ENCODE measurements at regions of chr5 and their contacts with region 1.

Region 1: GRCh38 chr5:139593716-139594319 is 32.7 kb downstream of the UBE2D2 start:
- DNase-seq: peak; percentile 40 to 65
- ATAC-seq: peak; percentile 68 to 70; a peak in 5 of 6 replicates
- H3K4me3 ChIP-seq: no peak overlapping the region
- H3K27ac ChIP-seq: peak overlapping the region; percentile 49 to 75; a peak in 5 of 6 replicates
- H3K4me1 ChIP-seq: peaks cover 42% of the 10 kb centered on the region
- CTCF ChIP-seq: no peak
- EP300 ChIP-seq: no peak
- POLR2A ChIP-seq: no peak
- RAD21 ChIP-seq: no peak

Region 2: DNA sequence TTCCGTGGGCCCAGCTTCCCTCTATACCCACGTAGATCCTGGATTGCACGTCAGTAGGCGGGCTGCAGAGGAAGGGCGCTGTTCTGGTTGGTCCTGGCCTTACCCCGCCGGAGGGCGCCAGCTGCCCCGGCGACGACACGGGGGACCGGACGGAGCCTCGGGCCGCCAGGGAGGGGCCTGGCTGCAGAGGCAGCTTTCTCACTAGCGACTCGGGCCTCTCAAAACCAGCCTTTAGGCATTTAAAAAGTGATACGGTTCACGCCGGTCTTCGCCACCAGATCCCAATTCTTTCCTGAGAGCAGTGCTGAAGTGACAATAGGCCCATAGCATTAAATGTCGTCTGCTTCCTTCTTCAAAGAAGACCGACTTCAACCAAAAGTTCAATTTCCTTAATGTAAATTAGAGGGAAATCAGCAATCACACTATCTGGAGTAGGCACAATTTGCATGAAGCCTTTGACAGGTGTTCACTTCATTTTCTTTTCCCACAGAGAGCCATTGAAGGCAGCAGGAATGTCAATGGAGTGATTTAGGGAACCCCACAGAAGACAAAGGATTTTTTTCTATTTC is 50.3 kb before region 1 on chr5:
- CTCF ChIA-PET with region 1: no interaction called
- POLR2A ChIA-PET with region 1: no interaction called
- DNase-seq: no peak
- ATAC-seq: peak in 1 of 2 experiments; percentile 69; a peak in 3 of 6 replicates
- H3K4me3 ChIP-seq: no peak overlapping the region
- H3K27ac ChIP-seq: no peak overlapping the region
- H3K4me1 ChIP-seq: no peaks in the 10 kb centered on the region
- CTCF ChIP-seq: no peak
- EP300 ChIP-seq: no peak
- POLR2A ChIP-seq: no peak
- RAD21 ChIP-seq: no peak

Region 3: GRCh38 chr5:139574641-139575312 is 19.0 kb before region 1 on chr5:
- CTCF ChIA-PET with region 1: interaction called, 11 read pairs
- POLR2A ChIA-PET with region 1: no interaction called
- DNase-seq: peak; percentile 44 to 46
- ATAC-seq: peak; percentile 80 to 89; a peak in 5 of 6 replicates
- H3K4me3 ChIP-seq: no peak overlapping the region
- H3K27ac ChIP-seq: no peak overlapping the region
- H3K4me1 ChIP-seq: peaks cover 29% of the 10 kb centered on the region; the same call in 2 of the 3 replicates
- CTCF ChIP-seq: peak; percentile 74
- EP300 ChIP-seq: no peak
- POLR2A ChIP-seq: no peak
- RAD21 ChIP-seq: peak; percentile 64 to 71